Gastrocnemius medialis (tissue), 4 donors: ENCODE measurements at regions of chr1 and their contacts with region 1.

Region 1: DNA sequence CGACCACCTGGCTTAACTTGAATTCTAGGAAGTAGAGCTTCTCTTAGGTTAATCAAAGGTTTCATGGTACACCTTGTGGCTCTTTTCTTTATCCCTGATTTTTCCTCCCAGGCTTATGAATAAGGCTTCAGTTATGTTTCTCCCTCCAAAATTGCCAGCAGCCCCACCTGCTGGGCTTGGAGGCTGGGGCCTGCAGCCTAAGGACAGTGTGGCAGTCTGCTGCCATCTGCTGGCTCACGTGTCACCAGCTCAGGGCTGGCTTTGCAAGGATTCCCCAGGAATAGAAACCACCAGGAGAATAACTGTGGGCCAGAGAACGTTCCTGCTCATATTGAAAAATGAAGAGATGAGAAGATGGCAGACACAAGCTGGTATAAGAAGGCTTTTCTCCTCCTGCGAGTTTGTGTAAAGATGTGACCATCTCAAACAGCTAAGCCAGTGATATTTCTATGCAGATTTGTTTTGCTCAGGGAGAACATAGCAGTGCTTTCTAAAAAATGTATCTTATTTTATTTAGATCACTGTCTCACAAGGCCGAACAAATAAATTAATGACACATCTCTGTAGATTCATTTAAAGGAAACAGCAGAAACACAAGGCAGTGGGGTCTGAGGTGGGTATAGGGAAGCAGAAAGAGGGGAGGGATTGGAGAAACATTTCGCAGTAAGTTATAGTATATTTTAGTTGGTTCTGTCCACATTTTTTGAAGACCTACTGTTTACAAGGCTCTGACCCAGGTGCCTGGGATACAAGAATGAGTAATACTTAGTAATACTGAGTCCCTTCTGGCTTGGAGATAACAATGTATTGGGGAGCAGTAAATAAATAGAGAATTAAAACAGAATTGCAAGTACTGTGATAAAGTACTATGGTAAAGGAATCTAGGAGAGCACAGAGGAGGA is 291.1 kb upstream of the SGIP1 start:
- DNase-seq: peak; percentile 63 to 77
- ATAC-seq: peak; percentile 90 to 94
- H3K4me3 ChIP-seq: no peak overlapping the region
- H3K27ac ChIP-seq: no peak overlapping the region
- H3K4me1 ChIP-seq: peaks cover 0 to 7% of the 10 kb centered on the region in 2 donors
- H3K27me3 ChIP-seq: no peaks in the 10 kb centered on the region
- CTCF ChIP-seq: peak; percentile 89 to 99 (median 94)
- POLR2A ChIP-seq: no peak

Region 2: GRCh38 chr1:65948609-65949229 is 294.2 kb before region 1 on chr1:
- in situ Hi-C with region 1: loop called in 3 of 4 experiments (anchors 5 kb)
- intact Hi-C with region 1: no loop called
- DNase-seq: no peak
- ATAC-seq: peak; percentile 46 to 54
- H3K4me3 ChIP-seq: no peak overlapping the region
- H3K27ac ChIP-seq: peak overlapping the region in 2 of 4 donors; percentile 26 to 33
- H3K4me1 ChIP-seq: no peaks in the 10 kb centered on the region
- H3K27me3 ChIP-seq: no peaks in the 10 kb centered on the region
- CTCF ChIP-seq: no peak
- POLR2A ChIP-seq: no peak

Region 3: GRCh38 chr1:65958561-65959350 is 284.1 kb before region 1 on chr1:
- in situ Hi-C with region 1: loop called (anchors 5 kb)
- intact Hi-C with region 1: loop called (anchors 1 kb)
- DNase-seq: no peak
- ATAC-seq: peak in 1 of 2 donors; percentile 52
- H3K4me3 ChIP-seq: no peak overlapping the region
- H3K27ac ChIP-seq: no peak overlapping the region
- H3K4me1 ChIP-seq: no peaks in the 10 kb centered on the region
- H3K27me3 ChIP-seq: no peaks in the 10 kb centered on the region
- CTCF ChIP-seq: peak; percentile 63 to 78 (median 68)
- POLR2A ChIP-seq: no peak

Region 4: GRCh38 chr1:66168948-66169671 is 73.8 kb before region 1 on chr1:
- in situ Hi-C with region 1: no loop called
- intact Hi-C with region 1: loop called (anchors 2 kb)
- DNase-seq: no peak
- ATAC-seq: no peak
- H3K4me3 ChIP-seq: no peak overlapping the region
- H3K27ac ChIP-seq: peak overlapping the region in 2 of 4 donors; percentile 19 to 24
- H3K4me1 ChIP-seq: peaks cover 10 to 15% of the 10 kb centered on the region in 2 donors
- H3K27me3 ChIP-seq: no peaks in the 10 kb centered on the region
- CTCF ChIP-seq: no peak
- POLR2A ChIP-seq: no peak

Region 5: GRCh38 chr1:66725885-66726665 is 483.2 kb after region 1 on chr1:
- in situ Hi-C with region 1: loop called in 1 of 4 experiments (anchors 25 kb)
- intact Hi-C with region 1: no loop called
- DNase-seq: peak in 1 of 2 donors; percentile 15
- ATAC-seq: peak in 1 of 2 donors; percentile 65
- H3K4me3 ChIP-seq: no peak overlapping the region
- H3K27ac ChIP-seq: no peak overlapping the region
- H3K4me1 ChIP-seq: no peaks in the 10 kb centered on the region
- H3K27me3 ChIP-seq: no peaks in the 10 kb centered on the region
- CTCF ChIP-seq: peak; percentile 40 to 93 (median 54)
- POLR2A ChIP-seq: no peak

Region 6: DNA sequence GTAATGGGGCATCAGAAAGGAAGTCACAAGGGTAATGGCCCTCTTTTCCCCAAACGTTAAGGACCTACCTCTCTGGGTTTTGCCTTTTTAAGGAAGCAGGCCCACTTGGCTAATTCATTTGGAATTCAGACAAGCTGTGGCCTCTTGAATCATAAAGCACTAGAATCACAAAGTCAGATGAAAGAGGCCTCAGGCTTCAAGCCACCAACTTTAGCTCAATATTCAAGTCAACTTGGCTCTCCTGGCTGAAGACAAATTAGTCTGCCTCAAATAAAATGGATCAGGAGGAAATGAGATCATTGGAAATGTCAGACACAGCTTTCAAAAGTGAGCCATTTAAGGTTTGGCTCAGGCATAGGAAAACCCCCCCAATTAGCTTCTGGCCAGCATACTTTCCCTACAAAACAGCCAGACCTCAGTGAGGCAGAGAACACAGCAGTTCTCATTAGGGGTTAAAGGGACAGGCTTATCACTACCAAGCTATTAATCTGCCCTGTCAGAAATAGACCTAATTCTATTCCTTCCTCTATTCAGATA is 776.8 kb after region 1 on chr1:
- in situ Hi-C with region 1: no loop called
- intact Hi-C with region 1: no loop called
- DNase-seq: no peak
- ATAC-seq: no peak
- H3K4me3 ChIP-seq: no peak overlapping the region
- H3K27ac ChIP-seq: peak overlapping the region in 3 of 4 donors; percentile 3 to 7 (median 4)
- H3K4me1 ChIP-seq: peaks cover 0 to 3% of the 10 kb centered on the region in 2 donors
- H3K27me3 ChIP-seq: no peaks in the 10 kb centered on the region
- CTCF ChIP-seq: no peak
- POLR2A ChIP-seq: no peak